AG04449 (cell line): ENCODE measurements at regions of chr19 and their contacts with region 1.

Region 1: GRCh38 chr19:48110350-48110966 is at the start of gene PLA2G4C:
- DNase-seq: peak; percentile 70
- H3K4me3 ChIP-seq: peak within 1 kb of the TSS; percentile 69
- CTCF ChIP-seq: no peak

Region 2: DNA sequence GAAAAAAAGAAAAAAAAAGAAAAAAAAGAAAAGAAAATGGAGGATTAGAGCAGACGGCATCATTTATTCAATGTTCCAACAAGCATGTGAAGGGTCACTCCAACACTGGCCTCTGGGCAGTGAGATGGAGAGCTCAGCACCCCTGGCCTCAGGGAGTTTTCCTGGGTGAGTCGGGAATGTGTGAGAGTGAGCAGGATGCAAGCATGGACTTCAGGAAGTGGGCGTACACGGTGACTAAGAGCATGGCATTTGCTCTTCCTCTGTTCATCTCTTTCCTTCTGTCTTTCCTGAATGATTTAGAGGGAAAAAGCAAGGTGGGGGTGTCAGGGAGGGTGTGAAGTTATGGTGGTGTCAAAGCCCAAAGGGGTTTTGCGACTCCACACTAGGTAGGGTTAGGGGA is 65.9 kb before region 1 on chr19:
- CTCF ChIA-PET with region 1: no interaction called
- POLR2A ChIA-PET with region 1: no interaction called
- DNase-seq: no peak
- H3K4me3 ChIP-seq: no peak overlapping the region
- CTCF ChIP-seq: no peak

Region 3: DNA sequence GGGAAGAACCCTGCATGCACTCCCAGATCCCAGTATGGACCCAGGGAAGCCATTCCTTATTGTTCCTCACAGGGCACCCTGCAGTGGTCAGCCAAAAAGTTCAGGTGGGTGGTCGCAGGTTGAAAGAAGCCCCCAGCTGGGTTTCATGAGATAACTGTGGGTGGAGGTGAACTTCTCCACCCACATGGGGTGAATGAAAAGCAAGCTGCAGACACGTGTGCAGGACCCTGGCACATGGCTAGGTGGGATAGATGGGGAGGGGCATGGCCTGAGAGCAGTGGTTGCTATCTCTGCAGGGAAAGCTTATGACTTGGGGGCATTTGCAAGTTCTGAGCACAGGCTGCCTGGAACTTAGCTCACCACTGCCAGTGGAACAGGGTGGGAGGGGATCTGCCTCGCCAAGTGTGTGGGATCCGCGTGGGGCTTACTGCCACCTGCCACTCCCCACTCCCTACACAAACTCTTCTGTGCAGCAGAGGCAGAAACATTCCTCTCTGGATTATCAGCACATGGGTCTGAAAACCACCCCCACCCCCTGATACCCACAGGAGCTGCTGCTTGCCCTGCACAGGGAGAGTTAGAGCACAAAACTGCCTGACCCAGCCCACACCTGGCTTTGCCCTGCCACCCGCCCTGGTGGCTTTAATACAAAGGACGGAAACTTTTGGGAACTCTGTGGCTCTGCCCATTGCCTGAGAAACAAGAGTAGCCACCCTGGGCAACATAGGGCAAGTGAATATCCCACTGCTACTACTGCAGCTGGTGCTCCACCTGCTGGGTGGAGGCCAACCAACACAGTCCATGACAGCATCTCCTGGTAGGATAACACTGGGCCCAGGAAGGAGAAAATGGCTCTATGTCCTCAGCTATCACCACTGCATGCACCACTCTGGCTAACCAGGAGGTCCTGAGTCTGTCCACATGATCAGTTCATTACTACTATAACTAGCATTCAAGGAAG is 24.3 kb before region 1 on chr19:
- CTCF ChIA-PET with region 1: interaction called, 11 read pairs
- POLR2A ChIA-PET with region 1: no interaction called
- DNase-seq: no peak
- H3K4me3 ChIP-seq: no peak overlapping the region
- CTCF ChIP-seq: no peak

Region 4: GRCh38 chr19:48123907-48124651 is 13.6 kb after region 1 on chr19:
- CTCF ChIA-PET with region 1: interaction called, 44 read pairs
- POLR2A ChIA-PET with region 1: interaction called, 5 read pairs
- DNase-seq: no peak
- H3K4me3 ChIP-seq: no peak overlapping the region
- CTCF ChIP-seq: peak; percentile 5

Region 5: DNA sequence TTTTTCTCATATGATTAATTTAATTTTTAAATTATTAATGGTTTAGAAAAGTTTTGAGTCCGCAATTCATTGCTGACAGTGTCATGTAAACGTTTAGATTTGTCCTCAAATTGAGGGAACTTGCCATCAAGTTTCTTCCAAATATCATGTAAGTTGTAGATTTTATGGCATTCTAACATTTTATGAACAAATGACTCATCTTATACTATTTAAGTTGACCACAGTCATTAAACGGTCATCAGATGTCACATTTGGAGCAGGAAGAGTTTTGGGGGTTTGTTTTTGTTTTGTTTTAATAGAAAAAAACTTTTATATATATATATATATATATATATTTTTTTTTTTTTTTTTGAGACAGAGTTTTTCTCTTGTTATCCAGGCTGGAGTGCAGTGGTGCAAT is 163.7 kb after region 1 on chr19:
- CTCF ChIA-PET with region 1: no interaction called
- POLR2A ChIA-PET with region 1: no interaction called
- DNase-seq: no peak
- H3K4me3 ChIP-seq: no peak overlapping the region
- CTCF ChIP-seq: no peak